GM12878 (cell line): ENCODE measurements at regions of chr15 and their contacts with region 1.

Region 1: GRCh38 chr15:68829068-68829467 is 8.4 kb upstream of the ANP32A start:
- DNase-seq: no peak
- ATAC-seq: peak; percentile 97
- H3K4me3 ChIP-seq: no peak overlapping the region
- H3K27ac ChIP-seq: no peak overlapping the region
- H3K4me1 ChIP-seq: no peaks in the 10 kb centered on the region; the same call in 1 of the 2 replicates
- H3K27me3 ChIP-seq: no peaks in the 10 kb centered on the region
- CTCF ChIP-seq: peak; percentile 64 to 78 (median 72); a peak in 5 of 6 replicates
- EP300 ChIP-seq: no peak
- POLR2A ChIP-seq: no peak
- RAD21 ChIP-seq: peak; percentile 77

Region 2: DNA sequence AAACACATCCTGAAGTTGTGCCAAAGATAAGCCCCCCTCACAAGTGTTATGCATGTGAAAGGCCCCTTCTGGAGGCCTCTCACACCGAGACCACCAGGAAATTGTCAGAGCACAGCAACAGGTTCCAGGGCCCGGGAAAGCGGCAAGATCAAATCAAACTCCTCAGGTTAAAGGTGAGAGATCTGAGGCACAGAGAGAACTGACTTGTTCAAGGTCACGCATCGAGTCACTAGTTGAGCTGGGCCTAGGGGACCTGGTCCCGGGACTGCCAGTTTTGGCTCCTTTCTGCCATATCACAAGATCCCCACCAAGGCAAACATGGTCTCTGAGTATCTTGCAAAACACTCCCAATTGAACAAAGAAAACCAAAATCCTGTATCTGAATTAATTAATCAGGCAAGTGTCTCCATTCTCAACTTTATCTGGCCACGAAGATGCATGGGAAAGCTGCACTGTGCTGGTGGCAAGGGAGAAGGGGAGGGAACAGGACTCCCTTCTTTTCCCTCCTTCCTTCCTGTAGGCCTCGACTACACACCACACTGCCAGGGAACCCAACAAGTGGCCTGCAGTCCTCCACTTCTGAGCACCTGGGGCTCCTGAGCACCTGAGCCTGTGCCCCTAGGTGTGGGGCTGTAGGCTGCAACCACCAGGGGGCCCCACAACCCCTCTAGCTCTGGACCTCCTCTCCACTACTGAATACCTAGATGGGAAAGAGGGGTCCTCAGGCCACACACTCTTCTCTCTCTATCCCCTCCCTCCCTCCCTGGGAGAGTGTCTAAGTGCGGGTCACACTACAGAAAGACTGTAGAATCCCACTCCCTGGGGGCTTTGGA is 45.6 kb before region 1 on chr15:
- CTCF ChIA-PET with region 1: interaction called, 124 read pairs
- POLR2A ChIA-PET with region 1: no interaction called
- RAD21 ChIA-PET with region 1: interaction called, 27 read pairs
- SMC1A ChIA-PET with region 1: interaction called, 36 read pairs
- in situ Hi-C with region 1: no loop called
- intact Hi-C with region 1: loop called (anchors 2 kb)
- DNase-seq: no peak
- ATAC-seq: peak; percentile 99
- H3K4me3 ChIP-seq: no peak overlapping the region
- H3K27ac ChIP-seq: no peak overlapping the region
- H3K4me1 ChIP-seq: peaks cover 9% of the 10 kb centered on the region
- H3K27me3 ChIP-seq: no peaks in the 10 kb centered on the region
- CTCF ChIP-seq: peak; percentile 69 to 83 (median 74)
- EP300 ChIP-seq: no peak
- POLR2A ChIP-seq: peak; percentile 30; the same call in 1 of the 2 replicates
- RAD21 ChIP-seq: peak; percentile 79